Activated naive CD4-positive, alpha-beta T cell treated with anti-CD3 and anti-CD28 coated beads for 36 hours (primary cell): ENCODE measurements at regions of chr12 and their contacts with region 1.

Region 1: DNA sequence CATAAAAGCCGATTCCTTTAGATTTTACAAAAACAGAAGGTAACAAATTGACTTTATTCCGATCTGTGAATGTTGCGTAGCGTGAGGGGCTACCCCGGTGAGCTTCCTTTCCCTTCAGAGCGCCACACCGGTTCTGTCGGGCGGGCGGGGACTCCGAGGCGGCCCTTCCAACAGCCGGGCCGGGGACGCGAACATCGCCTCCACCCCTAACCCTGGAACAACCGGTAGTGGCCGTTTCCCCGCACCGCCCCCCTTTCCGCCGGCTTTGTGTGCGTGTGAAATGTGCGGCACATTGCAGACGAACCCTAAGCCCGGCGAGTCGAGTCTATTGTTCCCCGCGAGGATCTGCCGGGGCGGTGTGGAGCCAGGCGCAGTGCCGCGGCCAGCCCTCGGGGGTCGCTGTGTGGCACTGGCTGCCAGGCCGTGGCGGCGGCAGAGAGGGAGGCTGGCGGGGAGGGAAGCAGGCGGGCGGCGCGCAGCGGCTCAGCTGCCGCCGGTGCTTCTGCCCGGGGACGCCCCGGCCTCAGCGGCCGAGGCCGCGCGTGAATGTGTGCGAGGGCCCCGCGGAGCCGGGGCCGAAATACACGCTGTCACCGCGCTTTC is 775 bp upstream of the ARID2 start:
- DNase-seq: peak; percentile 96
- H3K4me3 Mint-ChIP-seq: peak overlapping the region; percentile 95
- H3K27ac Mint-ChIP-seq: peak overlapping the region; percentile 99
- H3K4me1 Mint-ChIP-seq: peaks cover 19% of the 10 kb centered on the region
- H3K27me3 Mint-ChIP-seq: no peaks in the 10 kb centered on the region

Region 2: GRCh38 chr12:45089411-45090115 is 639.2 kb before region 1 on chr12:
- CTCF ChIA-PET with region 1: no interaction called
- intact Hi-C with region 1: no loop called
- DNase-seq: no peak
- H3K4me3 Mint-ChIP-seq: no peak overlapping the region
- H3K27ac Mint-ChIP-seq: no peak overlapping the region
- H3K4me1 Mint-ChIP-seq: no peaks in the 10 kb centered on the region
- H3K27me3 Mint-ChIP-seq: peaks cover 22% of the 10 kb centered on the region

Region 3: GRCh38 chr12:45170456-45171042 is 558.2 kb before region 1 on chr12:
- CTCF ChIA-PET with region 1: no interaction called
- intact Hi-C with region 1: loop called (anchors 1 kb)
- DNase-seq: peak; percentile 92
- H3K4me3 Mint-ChIP-seq: no peak overlapping the region
- H3K27ac Mint-ChIP-seq: no peak overlapping the region
- H3K4me1 Mint-ChIP-seq: no peaks in the 10 kb centered on the region
- H3K27me3 Mint-ChIP-seq: no peaks in the 10 kb centered on the region

Region 4: DNA sequence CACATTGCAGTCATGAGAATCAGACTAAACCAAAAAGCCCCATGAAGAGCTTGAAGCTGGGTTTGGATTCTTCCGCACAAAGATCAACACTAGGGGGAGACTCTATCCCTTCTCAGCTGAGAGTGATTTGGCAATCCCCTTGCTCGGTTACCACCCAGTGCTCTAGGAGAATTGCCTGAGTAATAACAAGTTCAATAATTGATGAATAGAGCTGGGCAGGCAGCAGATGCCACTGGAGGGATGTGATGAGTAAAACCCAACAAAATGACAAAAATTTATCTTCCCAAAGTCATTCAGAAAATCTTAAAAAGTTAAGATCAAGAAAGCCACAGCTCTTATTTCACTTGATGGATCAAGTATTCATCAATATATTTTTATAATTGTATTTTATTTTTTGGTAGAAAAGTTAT is 184.8 kb before region 1 on chr12:
- CTCF ChIA-PET with region 1: interaction called, 62 read pairs
- intact Hi-C with region 1: loop called (anchors 1 kb)
- DNase-seq: peak; percentile 70
- H3K4me3 Mint-ChIP-seq: no peak overlapping the region
- H3K27ac Mint-ChIP-seq: no peak overlapping the region
- H3K4me1 Mint-ChIP-seq: no peaks in the 10 kb centered on the region
- H3K27me3 Mint-ChIP-seq: peaks cover 6% of the 10 kb centered on the region

Region 5: DNA sequence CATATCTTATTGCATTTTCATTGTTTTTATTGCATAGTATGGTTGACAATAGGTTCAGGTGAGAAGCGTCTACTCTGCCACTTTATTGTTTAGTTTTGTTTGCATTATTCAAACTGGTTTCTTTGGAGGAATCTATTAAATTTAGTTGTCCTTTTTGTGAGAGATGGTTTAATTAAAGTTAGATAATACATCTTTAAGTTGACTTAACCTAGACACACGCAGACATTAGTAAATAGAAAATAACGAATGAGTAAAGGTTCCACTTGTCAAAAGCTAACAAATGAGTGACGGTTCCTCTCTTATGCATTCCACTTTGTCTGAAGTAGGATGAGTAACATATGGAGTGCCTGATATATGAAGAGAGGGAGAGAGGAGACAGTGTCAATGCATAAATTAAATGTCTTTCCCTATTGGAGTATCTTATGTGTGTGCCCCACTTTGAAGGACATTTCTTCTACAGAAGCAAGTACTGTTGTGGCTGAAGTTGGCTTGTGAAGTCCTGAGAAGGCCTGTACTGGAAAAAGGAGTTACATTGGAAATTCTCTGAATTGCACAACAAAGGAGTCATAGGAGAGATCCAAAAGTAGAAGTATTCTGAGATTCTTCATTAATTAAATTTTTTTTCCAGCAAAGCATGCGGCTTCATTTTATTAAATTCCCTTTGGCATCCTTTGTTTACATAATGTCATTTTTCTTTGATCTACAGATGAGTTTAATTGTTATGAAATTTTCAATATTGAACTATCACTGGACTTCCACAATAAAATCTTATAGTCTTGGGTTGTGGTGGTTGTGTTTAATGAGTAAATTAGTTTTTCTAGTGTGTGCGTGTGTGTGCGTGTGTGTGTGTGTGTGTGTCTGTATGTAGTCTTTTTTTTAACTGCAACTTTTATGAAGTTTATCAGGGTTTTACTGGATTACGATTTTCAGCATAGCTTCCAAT is 75.2 kb after region 1 on chr12:
- CTCF ChIA-PET with region 1: no interaction called
- intact Hi-C with region 1: no loop called
- DNase-seq: no peak
- H3K4me3 Mint-ChIP-seq: no peak overlapping the region
- H3K27ac Mint-ChIP-seq: no peak overlapping the region
- H3K4me1 Mint-ChIP-seq: peaks cover 38% of the 10 kb centered on the region
- H3K27me3 Mint-ChIP-seq: no peaks in the 10 kb centered on the region

Region 6: DNA sequence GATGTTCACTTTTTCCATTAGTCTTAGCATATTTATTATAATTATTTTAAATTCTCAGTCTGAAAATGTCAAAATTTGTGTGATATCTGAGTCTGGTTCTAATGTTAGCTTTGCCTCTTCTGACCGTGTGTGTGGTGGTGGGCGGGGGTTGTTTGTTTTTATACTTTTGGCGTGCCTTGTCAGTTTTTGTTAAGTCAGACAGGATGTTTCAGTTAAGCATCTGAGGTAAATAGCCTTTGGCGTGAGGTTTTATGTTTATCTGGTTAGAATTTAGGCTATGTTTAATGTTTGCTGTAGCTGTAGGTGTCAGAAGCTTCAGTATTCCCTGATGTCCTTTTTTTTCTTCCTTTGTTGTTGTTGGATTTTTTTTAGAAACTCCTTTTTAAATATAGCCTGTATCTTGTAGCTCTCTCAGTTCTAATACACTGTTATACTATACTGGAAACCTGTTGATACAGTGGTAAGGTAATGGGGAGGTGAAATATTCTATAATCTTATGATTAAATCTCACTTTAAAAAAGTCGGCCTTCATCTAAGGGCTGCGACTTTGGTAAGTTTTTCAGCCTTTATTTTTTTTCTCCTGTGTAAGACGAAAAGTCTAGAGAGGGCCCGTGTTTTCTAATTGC is 150.0 kb after region 1 on chr12:
- CTCF ChIA-PET with region 1: no interaction called
- intact Hi-C with region 1: no loop called
- DNase-seq: no peak
- H3K4me3 Mint-ChIP-seq: no peak overlapping the region
- H3K27ac Mint-ChIP-seq: no peak overlapping the region
- H3K4me1 Mint-ChIP-seq: peaks cover 28% of the 10 kb centered on the region
- H3K27me3 Mint-ChIP-seq: no peaks in the 10 kb centered on the region

Region 7: GRCh38 chr12:46217541-46218321 is 489.0 kb after region 1 on chr12:
- CTCF ChIA-PET with region 1: no interaction called
- intact Hi-C with region 1: loop called (anchors 5 kb)
- DNase-seq: peak; percentile 74
- H3K4me3 Mint-ChIP-seq: peak overlapping the region; percentile 33
- H3K27ac Mint-ChIP-seq: peak overlapping the region; percentile 100
- H3K4me1 Mint-ChIP-seq: peaks cover 95% of the 10 kb centered on the region
- H3K27me3 Mint-ChIP-seq: no peaks in the 10 kb centered on the region

Region 8: DNA sequence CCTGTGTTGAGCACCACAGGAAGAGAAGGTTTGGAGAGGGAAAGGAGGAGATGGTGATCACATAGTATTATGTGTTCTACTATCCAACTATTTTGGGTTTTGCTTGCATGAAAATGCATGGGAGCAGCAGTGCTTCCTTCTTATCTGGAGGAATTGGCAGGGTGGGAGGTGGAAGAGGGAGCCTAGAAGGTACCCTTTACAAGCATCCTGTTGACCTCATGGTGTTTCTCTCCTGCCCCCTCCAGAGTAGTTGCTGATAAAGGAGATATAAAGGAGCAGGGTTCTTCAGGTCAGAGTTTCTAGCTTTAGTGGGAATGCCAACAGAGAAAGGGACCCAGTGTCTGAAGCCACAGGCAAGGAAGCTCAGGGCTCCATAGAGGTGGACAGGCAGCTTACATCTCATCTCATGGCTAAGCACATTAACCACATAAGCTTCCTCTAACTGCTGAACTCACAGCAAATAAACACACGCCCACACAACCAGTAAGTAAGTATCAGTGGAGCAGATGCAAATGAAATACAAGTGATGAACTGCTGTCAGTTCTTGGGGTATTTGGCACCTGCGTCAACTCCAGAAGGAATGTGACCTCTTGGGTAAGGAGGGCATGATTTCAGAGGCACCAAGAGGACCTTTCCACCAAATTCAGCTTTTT is 818.0 kb after region 1 on chr12:
- CTCF ChIA-PET with region 1: no interaction called
- intact Hi-C with region 1: loop called (anchors 2 kb)
- DNase-seq: peak; percentile 45
- H3K4me3 Mint-ChIP-seq: no peak overlapping the region
- H3K27ac Mint-ChIP-seq: peak overlapping the region; percentile 74
- H3K4me1 Mint-ChIP-seq: peaks cover 58% of the 10 kb centered on the region
- H3K27me3 Mint-ChIP-seq: no peaks in the 10 kb centered on the region